Esophagus squamous epithelium (tissue), 5 donors: ENCODE measurements at regions of chr4 and their contacts with region 1.

Region 1: DNA sequence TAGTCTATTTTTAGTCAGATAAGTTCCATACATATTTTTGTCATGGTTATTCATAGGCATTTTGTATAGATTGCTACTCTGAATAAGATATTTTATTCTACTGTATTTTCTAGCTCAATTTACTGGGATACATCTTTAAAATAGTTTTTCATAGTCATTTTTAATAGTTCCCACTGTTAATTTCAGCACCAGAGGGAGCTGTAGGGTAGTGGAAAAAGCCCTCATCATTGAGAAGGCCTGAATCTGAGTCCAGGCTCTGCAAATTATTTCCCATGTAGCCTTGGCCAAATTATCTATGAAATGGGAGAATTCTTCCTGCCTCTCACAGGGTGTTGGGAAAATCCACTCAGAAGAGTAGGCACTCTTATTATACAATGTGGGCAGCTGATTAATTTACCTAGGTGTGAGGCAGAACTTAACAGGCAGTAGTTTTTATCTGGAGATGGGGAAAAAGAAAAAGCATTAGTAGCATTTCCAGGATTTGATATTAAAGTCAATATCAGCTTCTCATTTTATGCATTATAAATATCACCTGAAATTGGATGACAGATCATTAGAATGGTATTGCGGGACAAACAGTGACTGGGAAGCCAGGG is 102.9 kb upstream of the PAQR3 start:
- DNase-seq: no peak
- H3K4me3 ChIP-seq: no peak overlapping the region
- H3K27ac ChIP-seq: no peak overlapping the region
- H3K4me1 ChIP-seq: no peaks in the 10 kb centered on the region
- H3K27me3 ChIP-seq: no peaks in the 10 kb centered on the region
- CTCF ChIP-seq: peak; percentile 26 to 66 (median 46)
- POLR2A ChIP-seq: no peak

Region 2: GRCh38 chr4:78799551-78800495 is 242.4 kb before region 1 on chr4:
- intact Hi-C with region 1: no loop called
- DNase-seq: no peak
- H3K4me3 ChIP-seq: no peak overlapping the region
- H3K27ac ChIP-seq: no peak overlapping the region
- H3K4me1 ChIP-seq: peaks cover 5 to 14% (median 7%) of the 10 kb centered on the region in 3 donors
- H3K27me3 ChIP-seq: no peaks in the 10 kb centered on the region
- CTCF ChIP-seq: no peak
- POLR2A ChIP-seq: no peak

Region 3: DNA sequence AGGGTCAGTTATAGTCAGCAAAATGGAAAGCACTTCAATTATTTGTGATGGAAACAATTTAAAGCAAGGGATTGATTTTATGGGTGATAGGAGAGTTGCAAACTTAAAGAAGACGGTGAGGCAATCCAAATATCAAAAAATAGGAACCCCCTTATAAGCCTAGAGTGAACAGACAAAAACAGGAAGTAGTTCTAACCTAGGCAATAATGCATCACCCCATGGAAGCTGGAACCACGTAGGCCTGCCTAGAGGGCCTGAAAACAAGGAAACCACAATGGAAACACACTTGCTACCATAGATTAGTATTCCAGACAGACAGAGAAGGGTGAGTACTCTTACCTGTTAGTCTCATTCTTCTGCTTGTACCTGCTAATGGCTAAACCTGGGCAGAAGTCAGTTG is 379.3 kb after region 1 on chr4:
- intact Hi-C with region 1: no loop called
- DNase-seq: no peak
- H3K4me3 ChIP-seq: no peak overlapping the region
- H3K27ac ChIP-seq: no peak overlapping the region
- H3K4me1 ChIP-seq: no peaks in the 10 kb centered on the region
- H3K27me3 ChIP-seq: no peaks in the 10 kb centered on the region
- CTCF ChIP-seq: no peak
- POLR2A ChIP-seq: no peak

Region 4: GRCh38 chr4:79576429-79576753 is 534.2 kb after region 1 on chr4:
- intact Hi-C with region 1: loop called (anchors 10 kb)
- DNase-seq: no peak
- H3K4me3 ChIP-seq: no peak overlapping the region
- H3K27ac ChIP-seq: peak overlapping the region in 2 of 4 donors; percentile 63 to 64
- H3K4me1 ChIP-seq: peaks cover 0 to 23% (median 3%) of the 10 kb centered on the region in 3 donors
- H3K27me3 ChIP-seq: no peaks in the 10 kb centered on the region
- CTCF ChIP-seq: peak in 3 of 6 experiments; percentile 26 to 63 (median 32)
- POLR2A ChIP-seq: no peak